ENCODE measurements at regions of chr11 and their contacts with region 1.

Region 1: DNA sequence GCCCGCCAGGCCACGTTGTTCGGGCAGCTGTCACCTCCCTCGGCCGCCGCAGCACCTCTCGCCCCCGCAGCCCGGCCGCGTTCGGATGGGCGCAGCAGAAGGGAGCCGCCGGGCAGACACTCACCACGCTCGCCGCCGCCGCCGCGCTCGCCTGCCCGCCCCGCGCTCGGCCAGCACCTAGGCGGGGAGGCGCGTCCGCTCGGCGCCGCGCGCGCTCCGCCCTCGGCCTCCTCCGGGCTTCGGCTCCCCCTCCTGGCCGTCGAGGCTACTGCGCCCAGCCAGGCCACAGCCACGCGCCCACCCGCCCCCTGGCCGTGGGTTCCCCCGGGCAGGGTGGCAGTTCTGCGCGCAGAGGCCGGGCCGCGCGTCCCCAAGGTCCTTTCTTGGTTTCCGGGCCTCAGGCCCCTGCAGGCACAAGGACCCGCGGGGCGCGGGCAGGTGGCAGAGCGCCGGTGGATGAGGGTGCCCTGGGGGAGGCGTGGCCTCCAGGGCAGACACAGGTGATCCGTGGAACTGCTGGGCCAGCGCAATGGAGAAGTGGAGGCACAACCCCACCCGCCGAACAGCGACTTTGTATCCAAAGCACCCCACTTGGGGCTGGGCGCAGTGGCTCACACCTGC is at the start of gene SLC25A22:
- DNase-seq: peak; percentile 67 to 93 (median 83)
- ATAC-seq: peak; percentile 56
- H3K4me3 ChIP-seq: peak within 1 kb of the TSS; percentile 92 to 99
- H3K4me3 Mint-ChIP-seq: peak within 1 kb of the TSS; percentile 91
- H3K27ac ChIP-seq: peak within 1 kb of the TSS; percentile 78 to 96
- H3K27ac Mint-ChIP-seq: peak within 1 kb of the TSS; percentile 94
- H3K4me1 ChIP-seq: peaks cover 25% of the 10 kb centered on the region
- H3K4me1 Mint-ChIP-seq: peaks cover 16% of the 10 kb centered on the region
- H3K27me3 ChIP-seq: no peaks in the 10 kb centered on the region
- H3K27me3 Mint-ChIP-seq: no peaks in the 10 kb centered on the region
- CTCF ChIP-seq: peak; percentile 81
- total RNA-seq, gene SLC25A22: 11.6 to 15.7 TPM

Region 2: DNA sequence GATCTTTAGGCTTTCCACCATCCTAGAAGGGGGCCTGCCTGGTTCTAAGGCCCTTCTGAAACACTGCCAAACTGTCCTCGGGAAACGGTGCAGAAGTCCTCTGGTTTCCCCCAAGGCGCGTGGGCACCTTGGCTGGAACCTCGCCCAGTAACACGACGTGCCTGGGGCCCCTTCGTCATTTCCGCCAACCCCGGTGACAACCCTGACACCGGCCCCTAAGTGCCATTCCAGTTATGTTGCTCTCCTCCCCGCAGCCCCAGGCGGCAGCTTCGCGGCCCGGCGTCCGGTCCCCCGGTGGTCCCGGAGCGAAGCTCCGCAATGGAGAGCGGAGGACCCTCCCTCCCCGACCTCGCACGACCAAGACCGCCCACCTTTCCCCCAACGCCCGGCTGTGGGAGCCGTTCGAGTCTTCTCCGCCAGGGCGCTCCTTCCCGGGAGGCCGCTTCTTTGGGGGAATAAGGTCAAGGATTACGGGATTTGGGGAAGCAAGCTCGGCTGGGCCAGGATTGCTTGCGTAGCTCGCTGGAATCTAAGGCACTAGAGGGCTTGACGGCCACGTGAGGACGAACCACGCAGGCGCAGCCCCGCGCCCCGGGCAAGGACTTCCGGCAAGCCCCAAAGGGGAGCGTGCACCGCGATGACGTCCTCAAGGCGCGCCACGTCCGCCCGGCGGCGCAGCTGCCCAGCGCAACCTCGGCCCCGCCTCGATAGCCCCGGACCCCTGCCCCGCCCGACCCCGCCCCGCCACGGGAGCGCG is 291.8 kb before region 1 on chr11:
- CTCF ChIA-PET with region 1: no interaction called
- POLR2A ChIA-PET with region 1: no interaction called
- intact Hi-C with region 1: loop called in 1 of 2 experiments (anchors 1 kb)
- DNase-seq: peak; percentile 93 to 99 (median 98)
- ATAC-seq: peak; percentile 67
- H3K4me3 ChIP-seq: peak overlapping the region; percentile 93 to 99
- H3K4me3 Mint-ChIP-seq: peak overlapping the region; percentile 97
- H3K27ac ChIP-seq: peak overlapping the region; percentile 99 to 100
- H3K27ac Mint-ChIP-seq: peak overlapping the region; percentile 99
- H3K4me1 ChIP-seq: peaks cover 36% of the 10 kb centered on the region
- H3K4me1 Mint-ChIP-seq: peaks cover 25% of the 10 kb centered on the region
- H3K27me3 ChIP-seq: no peaks in the 10 kb centered on the region
- H3K27me3 Mint-ChIP-seq: no peaks in the 10 kb centered on the region
- CTCF ChIP-seq: no peak

Region 3: DNA sequence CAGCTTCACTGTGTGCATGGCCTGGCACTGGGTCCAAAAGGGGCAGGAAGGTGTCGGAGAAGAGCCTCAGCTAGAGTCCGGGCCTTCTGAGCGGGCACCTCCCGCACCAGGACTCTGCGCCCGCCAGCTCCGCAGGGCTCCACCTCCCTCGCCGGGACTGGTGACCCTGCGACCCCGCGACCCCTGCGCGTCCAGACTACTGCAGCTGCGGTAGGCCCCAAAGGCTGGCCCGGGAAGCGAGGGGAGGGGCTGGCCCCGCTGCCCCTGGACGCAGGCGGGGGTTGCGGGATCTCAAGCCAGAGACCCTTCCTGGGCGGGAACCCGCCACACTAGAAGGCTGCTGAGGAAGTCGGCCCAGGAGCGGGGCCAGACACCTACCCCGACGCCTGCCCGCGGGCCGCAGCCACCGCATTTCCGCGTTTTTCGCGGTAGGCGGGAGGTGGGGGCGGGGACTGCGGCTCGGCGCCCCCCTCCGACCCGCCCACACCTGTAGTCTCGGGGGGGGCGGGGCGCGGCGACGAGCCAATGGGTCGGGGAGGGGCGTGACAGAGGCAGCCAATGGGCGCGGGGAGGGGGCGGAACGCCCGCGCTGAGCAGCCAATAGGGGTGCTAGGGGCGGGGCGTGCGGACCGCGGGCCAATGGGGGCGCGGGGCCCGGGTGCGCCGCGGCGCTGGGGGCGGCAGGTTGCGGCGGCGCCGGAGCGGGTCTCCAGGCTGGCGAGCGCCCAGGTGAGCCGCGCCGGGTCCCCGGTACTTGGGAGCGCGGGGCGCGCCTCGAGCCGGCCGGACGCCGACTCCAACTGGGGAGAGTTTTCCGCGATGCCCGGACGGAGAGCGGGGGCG is 237.7 kb before region 1 on chr11 and contains the starts of genes LMNTD2 and RASSF7:
- CTCF ChIA-PET with region 1: no interaction called
- POLR2A ChIA-PET with region 1: no interaction called
- intact Hi-C with region 1: loop called (anchors 2 to 5 kb)
- DNase-seq: peak; percentile 92 to 98 (median 95)
- ATAC-seq: peak; percentile 94
- H3K4me3 ChIP-seq: peak within 1 kb of the TSS; percentile 51 to 94
- H3K4me3 Mint-ChIP-seq: peak within 1 kb of the TSS; percentile 88
- H3K27ac ChIP-seq: peak within 1 kb of the TSS; percentile 51 to 76
- H3K27ac Mint-ChIP-seq: peak within 1 kb of the TSS; percentile 84
- H3K4me1 ChIP-seq: peaks cover 19% of the 10 kb centered on the region
- H3K4me1 Mint-ChIP-seq: peaks cover 18% of the 10 kb centered on the region
- H3K27me3 ChIP-seq: no peaks in the 10 kb centered on the region
- H3K27me3 Mint-ChIP-seq: no peaks in the 10 kb centered on the region
- CTCF ChIP-seq: no peak
- total RNA-seq, gene LMNTD2: 4.2 to 5.6 TPM
- total RNA-seq, gene RASSF7: 11.8 to 15.3 TPM

Region 4: DNA sequence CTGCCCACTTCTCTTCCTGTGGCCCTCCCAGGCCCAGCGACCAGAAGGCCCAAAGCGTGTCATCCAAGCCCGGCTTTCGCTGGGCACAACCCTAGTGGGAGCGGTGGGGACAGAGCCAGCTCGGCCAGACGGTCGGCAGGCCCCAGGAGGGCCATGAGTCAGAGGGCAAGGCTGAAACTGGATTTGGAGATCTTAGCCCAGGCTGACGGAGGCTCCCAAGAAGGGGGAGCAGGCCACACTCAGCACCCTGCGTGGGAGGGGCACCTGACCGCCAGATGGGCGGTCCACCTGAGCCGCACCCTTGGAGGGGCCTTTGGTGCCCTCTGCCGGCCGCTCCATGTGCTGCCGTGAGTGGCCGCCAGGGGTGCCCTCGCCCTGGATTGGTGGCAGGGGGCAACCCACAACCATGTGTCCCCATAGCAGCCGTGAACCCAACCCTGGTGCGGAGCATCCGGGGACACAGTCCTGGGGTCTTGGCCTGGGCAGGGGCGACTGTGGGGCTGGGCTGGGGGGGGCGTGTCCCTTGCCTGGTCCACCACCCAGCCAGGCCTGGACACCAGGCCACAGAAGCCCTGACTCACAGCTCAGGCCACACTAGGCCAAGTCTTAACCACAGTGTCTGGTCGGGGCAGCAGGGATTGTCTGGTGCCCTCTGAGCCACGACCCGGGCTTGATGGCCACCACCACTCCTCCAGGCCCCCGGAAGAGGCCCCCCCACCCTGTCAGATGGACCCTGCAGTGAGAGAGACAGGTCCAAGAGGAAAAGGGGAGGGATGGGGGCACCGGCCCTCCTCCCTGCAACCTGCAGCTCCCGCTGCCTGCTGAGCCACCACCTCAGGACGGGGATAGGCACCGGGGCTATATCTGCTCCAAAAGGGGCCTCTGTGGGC is 70.1 kb before region 1 on chr11:
- CTCF ChIA-PET with region 1: no interaction called
- POLR2A ChIA-PET with region 1: interaction called, 3 read pairs
- intact Hi-C with region 1: loop called (anchors 1 to 5 kb)
- DNase-seq: peak; percentile 64 to 88 (median 83)
- ATAC-seq: peak; percentile 84
- H3K4me3 ChIP-seq: no peak overlapping the region
- H3K4me3 Mint-ChIP-seq: no peak overlapping the region
- H3K27ac ChIP-seq: no peak overlapping the region
- H3K27ac Mint-ChIP-seq: no peak overlapping the region
- H3K4me1 ChIP-seq: peaks cover 19% of the 10 kb centered on the region
- H3K4me1 Mint-ChIP-seq: peaks cover 10% of the 10 kb centered on the region
- H3K27me3 ChIP-seq: peaks cover 0 to 3% of the 10 kb centered on the region in 2 experiments
- H3K27me3 Mint-ChIP-seq: peaks cover 3% of the 10 kb centered on the region
- CTCF ChIP-seq: peak; percentile 94

Region 5: DNA sequence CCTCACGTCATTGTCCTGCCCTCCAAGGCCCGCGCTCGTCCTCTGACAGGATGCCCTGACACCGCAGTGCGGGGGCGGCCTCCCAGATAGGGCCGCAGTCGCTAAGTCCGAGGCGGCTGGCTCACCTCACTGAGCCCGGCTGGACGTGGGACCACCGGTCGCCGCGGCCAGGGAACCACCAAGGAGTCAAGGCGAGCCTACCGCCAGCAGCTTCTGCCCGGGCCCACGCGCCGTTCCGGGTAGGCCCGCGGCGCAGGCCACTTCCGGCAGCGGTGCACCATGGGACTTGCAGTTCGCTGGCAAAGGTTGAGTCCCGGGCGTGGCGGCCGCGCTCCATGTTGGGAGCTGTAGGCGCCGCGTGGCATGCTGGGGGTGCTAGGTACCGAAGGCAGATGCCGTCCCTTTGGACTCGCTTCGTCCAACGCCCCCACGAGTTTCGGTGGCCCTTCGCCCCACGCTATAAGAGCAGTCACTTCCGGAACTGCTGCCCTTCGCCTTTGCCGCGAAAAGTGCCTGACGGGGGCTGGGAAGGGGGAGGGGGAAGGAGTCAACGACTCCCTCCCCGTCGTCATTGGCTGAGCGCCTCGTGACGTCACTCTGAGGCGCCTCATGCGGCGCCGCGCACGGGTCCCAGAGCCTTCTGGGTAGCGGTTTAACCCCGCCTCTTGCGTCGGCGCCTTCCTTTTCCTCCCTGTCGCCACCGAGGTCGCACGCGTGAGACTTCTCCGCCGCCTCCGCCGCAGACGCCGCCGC is 11.3 kb after region 1 on chr11 and contains the start of gene RPLP2:
- CTCF ChIA-PET with region 1: interaction called, 3 read pairs
- POLR2A ChIA-PET with region 1: interaction called, 5 read pairs
- intact Hi-C with region 1: loop called (anchors 1 kb)
- DNase-seq: peak; percentile 93 to 99 (median 98)
- ATAC-seq: peak; percentile 80
- H3K4me3 ChIP-seq: peak within 1 kb of the TSS; percentile 85 to 96
- H3K4me3 Mint-ChIP-seq: peak within 1 kb of the TSS; percentile 94
- H3K27ac ChIP-seq: peak within 1 kb of the TSS; percentile 80 to 100
- H3K27ac Mint-ChIP-seq: peak within 1 kb of the TSS; percentile 97
- H3K4me1 ChIP-seq: peaks cover 37% of the 10 kb centered on the region
- H3K4me1 Mint-ChIP-seq: peaks cover 25% of the 10 kb centered on the region
- H3K27me3 ChIP-seq: no peaks in the 10 kb centered on the region
- H3K27me3 Mint-ChIP-seq: no peaks in the 10 kb centered on the region
- CTCF ChIP-seq: no peak
- total RNA-seq, gene RPLP2: 5,702 to 5,720 TPM

Region 6: DNA sequence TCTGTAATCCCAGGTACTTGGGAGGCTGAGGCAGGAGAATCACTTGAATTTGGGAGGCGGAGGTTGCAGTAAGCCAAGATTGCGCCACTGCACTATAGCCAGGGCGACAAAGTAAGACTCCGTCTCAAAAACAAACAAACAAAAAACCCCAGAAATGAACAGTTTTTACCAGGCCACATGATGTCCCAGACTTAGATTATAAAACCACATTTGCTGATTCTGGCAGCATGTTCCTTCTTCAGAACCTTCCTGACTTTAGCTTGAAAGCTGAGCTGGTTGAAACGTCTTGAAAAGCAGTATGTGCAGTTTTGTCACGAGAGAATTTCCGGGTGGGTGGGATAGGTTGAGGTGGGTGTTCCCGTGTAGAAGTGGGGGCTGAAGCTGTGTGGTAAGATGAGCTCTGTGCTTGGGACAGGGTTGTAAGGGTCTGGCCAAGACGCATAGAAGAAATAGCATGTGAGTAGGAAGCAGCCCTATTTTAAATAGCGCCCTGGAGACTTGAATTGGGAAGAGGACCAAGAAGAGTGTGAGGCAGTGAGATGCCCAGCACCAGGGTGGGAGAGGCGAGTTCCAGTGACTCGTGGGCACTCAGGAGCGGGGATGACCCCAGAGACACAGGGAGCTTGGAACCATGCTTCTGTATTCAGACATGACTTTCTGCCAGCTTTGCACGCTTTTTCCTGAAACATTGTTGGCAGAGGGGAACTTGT is 135.1 kb after region 1 on chr11:
- CTCF ChIA-PET with region 1: no interaction called
- POLR2A ChIA-PET with region 1: no interaction called
- intact Hi-C with region 1: no loop called
- DNase-seq: peak in 1 of 9 experiments; percentile 24
- ATAC-seq: no peak
- H3K4me3 ChIP-seq: no peak overlapping the region
- H3K4me3 Mint-ChIP-seq: peak overlapping the region; percentile 46
- H3K27ac ChIP-seq: no peak overlapping the region
- H3K27ac Mint-ChIP-seq: peak overlapping the region; percentile 57
- H3K4me1 ChIP-seq: peaks cover 58% of the 10 kb centered on the region
- H3K4me1 Mint-ChIP-seq: peaks cover 62% of the 10 kb centered on the region
- H3K27me3 ChIP-seq: no peaks in the 10 kb centered on the region
- H3K27me3 Mint-ChIP-seq: no peaks in the 10 kb centered on the region
- CTCF ChIP-seq: no peak

Region 7: DNA sequence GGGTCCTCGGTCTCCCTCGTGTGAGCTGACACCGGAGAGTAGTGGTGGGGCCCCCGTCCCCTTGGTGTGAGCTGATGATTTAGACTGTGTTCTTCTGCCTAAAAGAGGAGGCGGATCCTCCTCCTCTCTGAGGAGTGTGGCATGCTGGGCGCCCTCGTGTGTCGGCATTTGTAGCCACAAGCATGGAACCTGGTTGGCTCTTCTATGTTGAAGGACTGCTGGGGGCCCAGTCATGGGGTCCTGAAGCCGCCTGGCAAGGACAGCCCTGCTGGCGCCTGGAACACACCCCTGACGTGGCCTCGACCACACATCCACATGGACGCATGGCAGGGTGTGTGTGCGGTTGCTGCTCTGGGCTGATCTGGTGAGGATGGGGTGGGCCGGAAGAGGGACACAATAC is 177.6 kb after region 1 on chr11:
- CTCF ChIA-PET with region 1: no interaction called
- POLR2A ChIA-PET with region 1: no interaction called
- intact Hi-C with region 1: no loop called
- DNase-seq: no peak
- ATAC-seq: peak; percentile 36
- H3K4me3 ChIP-seq: no peak overlapping the region
- H3K4me3 Mint-ChIP-seq: no peak overlapping the region
- H3K27ac ChIP-seq: no peak overlapping the region
- H3K27ac Mint-ChIP-seq: no peak overlapping the region
- H3K4me1 ChIP-seq: peaks cover 12% of the 10 kb centered on the region
- H3K4me1 Mint-ChIP-seq: peaks cover 26% of the 10 kb centered on the region
- H3K27me3 ChIP-seq: no peaks in the 10 kb centered on the region
- H3K27me3 Mint-ChIP-seq: no peaks in the 10 kb centered on the region
- CTCF ChIP-seq: no peak